Activated naive CD4-positive, alpha-beta T cell treated with anti-CD3 and anti-CD28 coated beads for 36 hours (primary cell): ENCODE measurements at regions of chr3 and their contacts with region 1.

Region 1: DNA sequence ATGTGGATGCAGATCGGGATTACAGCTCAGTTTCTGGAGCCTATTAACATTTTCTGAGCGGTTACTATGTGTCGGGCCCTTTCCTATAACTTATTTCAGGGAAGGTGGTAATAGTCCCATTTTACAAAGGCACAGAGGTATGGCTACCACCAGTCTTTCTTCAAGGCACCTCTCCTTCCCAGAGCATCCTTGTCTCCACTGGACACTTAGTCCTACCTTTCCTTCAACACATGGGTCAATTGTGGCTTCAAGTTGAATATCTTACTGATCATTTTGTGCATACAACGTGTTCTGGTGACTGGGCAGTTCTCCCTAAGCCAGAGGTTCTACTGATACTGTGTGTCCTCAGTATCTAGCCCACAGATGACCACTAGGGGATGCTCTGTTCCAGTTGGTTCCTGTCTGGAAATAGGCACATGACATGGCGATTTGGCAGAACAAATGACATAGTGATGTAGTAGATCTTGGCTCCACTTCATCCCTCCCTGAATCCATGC is 60.7 kb upstream of the CMTM8 start:
- DNase-seq: peak; percentile 82
- H3K4me3 Mint-ChIP-seq: peak overlapping the region; percentile 51
- H3K27ac Mint-ChIP-seq: no peak overlapping the region
- H3K4me1 Mint-ChIP-seq: peaks cover 10% of the 10 kb centered on the region
- H3K27me3 Mint-ChIP-seq: no peaks in the 10 kb centered on the region

Region 2: DNA sequence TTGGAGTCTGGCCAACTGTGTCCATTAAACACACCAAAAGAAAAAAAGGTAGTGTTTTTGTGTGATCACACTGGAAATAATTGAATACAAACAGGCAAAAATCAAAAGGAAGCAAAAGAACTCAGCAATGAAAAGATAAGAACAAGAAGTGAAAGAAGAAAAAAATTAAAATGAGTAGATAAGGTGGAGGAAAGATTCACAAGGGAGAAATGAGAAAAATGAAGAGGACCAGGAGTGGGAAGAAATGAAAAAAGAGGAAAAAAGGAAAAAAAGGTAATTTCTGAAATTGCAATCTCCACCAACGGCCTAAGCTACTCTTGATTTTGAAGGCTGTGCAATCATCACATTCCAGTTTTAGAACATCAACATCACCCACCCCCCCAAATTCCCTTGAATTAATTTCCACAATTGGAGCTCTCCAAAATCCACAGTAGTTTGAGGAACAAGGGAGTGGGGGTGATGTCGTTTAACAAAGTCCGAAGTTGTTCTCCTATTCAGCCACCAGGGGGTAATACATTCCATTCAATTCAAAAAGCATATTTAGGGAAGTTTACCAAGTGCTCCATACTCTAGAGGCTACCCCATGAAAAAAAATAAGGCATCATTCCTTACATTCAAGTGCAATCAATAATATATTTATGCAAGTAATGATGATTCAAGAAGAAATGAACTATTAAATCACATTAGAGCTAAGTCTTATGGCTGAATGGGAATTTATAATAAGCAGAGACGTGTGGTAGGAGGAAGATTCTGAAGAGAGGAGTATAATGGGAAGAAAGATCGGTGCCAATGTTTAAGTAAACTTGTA is 158.8 kb before region 1 on chr3:
- CTCF ChIA-PET with region 1: interaction called, 4 read pairs
- intact Hi-C with region 1: loop called (anchors 1 kb)
- DNase-seq: no peak
- H3K4me3 Mint-ChIP-seq: no peak overlapping the region
- H3K27ac Mint-ChIP-seq: no peak overlapping the region
- H3K4me1 Mint-ChIP-seq: no peaks in the 10 kb centered on the region
- H3K27me3 Mint-ChIP-seq: peaks cover 2% of the 10 kb centered on the region

Region 3: GRCh38 chr3:32296256-32297204 is 118.8 kb after region 1 on chr3:
- CTCF ChIA-PET with region 1: interaction called, 13 read pairs
- intact Hi-C with region 1: loop called (anchors 1 kb)
- DNase-seq: peak; percentile 80
- H3K4me3 Mint-ChIP-seq: peak overlapping the region; percentile 45
- H3K27ac Mint-ChIP-seq: peak overlapping the region; percentile 85
- H3K4me1 Mint-ChIP-seq: peaks cover 24% of the 10 kb centered on the region
- H3K27me3 Mint-ChIP-seq: no peaks in the 10 kb centered on the region

Region 4: DNA sequence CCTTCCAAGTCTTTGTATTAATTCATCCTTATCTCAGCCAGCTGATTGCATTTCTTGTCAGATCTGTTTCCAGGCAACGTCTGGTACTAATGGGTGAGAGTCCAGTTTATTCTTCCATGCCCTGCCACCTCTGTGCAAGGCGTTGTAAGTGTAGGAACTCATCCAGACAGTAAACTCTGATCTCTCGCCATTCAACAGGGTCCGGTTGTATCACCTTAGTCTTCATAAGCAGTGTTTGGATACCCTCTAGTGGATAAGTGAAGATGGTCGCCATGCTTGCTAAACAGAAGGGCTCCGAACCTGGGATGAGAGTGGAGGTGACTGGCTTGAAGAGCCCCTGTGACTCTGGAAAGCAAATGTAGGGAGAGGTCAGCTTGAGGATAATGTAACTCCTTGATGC is 162.3 kb after region 1 on chr3:
- CTCF ChIA-PET with region 1: interaction called, 45 read pairs
- intact Hi-C with region 1: loop called (anchors 1 kb)
- DNase-seq: peak; percentile 28
- H3K4me3 Mint-ChIP-seq: no peak overlapping the region
- H3K27ac Mint-ChIP-seq: no peak overlapping the region
- H3K4me1 Mint-ChIP-seq: peaks cover 20% of the 10 kb centered on the region
- H3K27me3 Mint-ChIP-seq: no peaks in the 10 kb centered on the region

Region 5: DNA sequence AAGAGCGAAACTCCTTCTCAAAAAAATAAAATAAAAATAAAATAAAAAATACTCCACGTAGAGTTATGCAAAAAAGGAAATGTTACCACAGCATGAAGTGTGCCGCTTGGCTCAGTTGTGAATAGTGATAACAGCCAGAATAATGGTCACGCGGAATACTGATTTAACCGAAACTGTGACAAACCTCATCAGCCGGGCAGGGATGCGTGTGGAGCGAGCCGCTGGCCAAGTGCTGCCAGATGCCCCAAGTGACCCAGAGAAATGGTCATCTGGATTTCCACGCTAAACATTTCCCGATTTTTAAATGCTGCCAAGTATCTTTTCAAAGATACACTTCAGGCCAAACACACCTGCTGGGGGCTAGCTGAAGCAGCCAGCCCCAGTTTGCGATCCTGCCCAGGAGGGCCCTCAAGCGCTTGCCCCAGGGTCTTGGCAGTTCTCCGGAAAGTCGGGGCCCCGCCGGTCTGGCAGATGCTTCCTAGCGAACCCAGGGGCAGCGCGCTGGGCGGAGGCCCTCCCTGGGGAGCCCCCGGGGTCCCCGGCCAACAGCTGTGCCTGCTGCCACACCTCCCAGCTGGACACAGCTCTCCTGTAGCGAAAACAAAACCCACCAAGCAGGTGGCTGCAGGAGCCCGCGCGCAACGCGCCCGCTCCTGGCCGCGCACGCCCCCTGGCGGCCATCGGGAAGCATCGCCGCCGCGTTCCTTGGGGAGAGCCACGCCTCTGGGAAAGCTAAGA is 289.8 kb after region 1 on chr3:
- CTCF ChIA-PET with region 1: interaction called, 12 read pairs
- intact Hi-C with region 1: loop called (anchors 1 kb)
- DNase-seq: peak; percentile 78
- H3K4me3 Mint-ChIP-seq: peak overlapping the region; percentile 20
- H3K27ac Mint-ChIP-seq: peak overlapping the region; percentile 54
- H3K4me1 Mint-ChIP-seq: peaks cover 42% of the 10 kb centered on the region
- H3K27me3 Mint-ChIP-seq: no peaks in the 10 kb centered on the region

Region 6: DNA sequence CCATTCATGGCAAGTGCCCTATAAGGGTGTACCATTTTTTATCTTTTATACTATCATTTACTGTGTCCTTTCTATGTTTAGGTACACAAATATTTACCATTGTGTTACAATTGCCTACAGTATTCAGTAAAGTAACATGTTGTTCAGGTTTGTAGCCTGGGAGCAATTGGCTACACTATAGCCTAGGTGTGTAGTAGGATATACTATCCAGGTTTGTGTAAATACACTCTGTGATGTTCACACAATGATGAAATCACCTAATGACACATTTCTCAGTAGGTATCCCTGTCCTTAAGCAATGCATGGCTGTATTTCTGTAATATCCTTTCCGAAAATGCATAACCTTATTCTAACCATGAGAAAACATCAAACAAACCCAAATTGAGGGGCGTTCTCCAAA is 489.4 kb after region 1 on chr3:
- CTCF ChIA-PET with region 1: interaction called, 5 read pairs
- intact Hi-C with region 1: loop called (anchors 1 kb)
- DNase-seq: no peak
- H3K4me3 Mint-ChIP-seq: no peak overlapping the region
- H3K27ac Mint-ChIP-seq: no peak overlapping the region
- H3K4me1 Mint-ChIP-seq: no peaks in the 10 kb centered on the region
- H3K27me3 Mint-ChIP-seq: no peaks in the 10 kb centered on the region